CD4-positive, alpha-beta memory T cell (primary cell): ENCODE measurements at regions of chrX and their contacts with region 1.

Region 1: DNA sequence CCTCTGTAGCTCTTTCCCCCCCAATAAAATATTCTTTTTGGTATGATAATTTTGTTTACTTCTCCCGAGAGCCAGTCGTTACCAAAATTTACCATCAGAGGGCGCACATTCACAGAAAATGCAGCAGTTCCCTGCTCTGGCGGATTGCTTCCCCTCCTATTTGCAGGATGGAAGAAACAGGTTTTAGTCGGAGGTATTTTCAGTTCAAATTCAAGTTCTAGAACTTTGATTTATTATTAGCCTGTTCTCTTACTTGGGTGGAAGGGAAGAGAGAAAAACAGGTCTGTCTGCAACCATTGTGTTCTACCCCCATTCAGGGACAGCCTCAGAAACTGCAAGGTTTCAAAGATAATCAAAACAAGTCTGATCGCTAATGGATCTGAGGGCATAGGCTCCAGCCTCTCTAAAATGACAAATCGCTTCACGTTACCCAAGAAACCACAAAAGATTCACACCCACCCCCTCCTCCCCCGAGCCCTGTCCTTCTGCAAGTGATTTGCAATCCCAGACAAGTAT is 263.8 kb upstream of the RPS6KA3 start:
- DNase-seq: peak; percentile 39 to 57 (median 50)
- H3K4me3 ChIP-seq: no peak overlapping the region
- H3K4me3 Mint-ChIP-seq: peak overlapping the region in 2 of 8 donors; percentile 12 to 45
- H3K27ac ChIP-seq: no peak overlapping the region
- H3K27ac Mint-ChIP-seq: no peak overlapping the region
- H3K4me1 ChIP-seq: no peaks in the 10 kb centered on the region
- H3K4me1 Mint-ChIP-seq: peaks cover 2 to 11% (median 6%) of the 10 kb centered on the region in 4 donors
- H3K27me3 ChIP-seq: no peaks in the 10 kb centered on the region
- H3K27me3 Mint-ChIP-seq: peaks cover 11 to 17% of the 10 kb centered on the region in 2 donors

Region 2: DNA sequence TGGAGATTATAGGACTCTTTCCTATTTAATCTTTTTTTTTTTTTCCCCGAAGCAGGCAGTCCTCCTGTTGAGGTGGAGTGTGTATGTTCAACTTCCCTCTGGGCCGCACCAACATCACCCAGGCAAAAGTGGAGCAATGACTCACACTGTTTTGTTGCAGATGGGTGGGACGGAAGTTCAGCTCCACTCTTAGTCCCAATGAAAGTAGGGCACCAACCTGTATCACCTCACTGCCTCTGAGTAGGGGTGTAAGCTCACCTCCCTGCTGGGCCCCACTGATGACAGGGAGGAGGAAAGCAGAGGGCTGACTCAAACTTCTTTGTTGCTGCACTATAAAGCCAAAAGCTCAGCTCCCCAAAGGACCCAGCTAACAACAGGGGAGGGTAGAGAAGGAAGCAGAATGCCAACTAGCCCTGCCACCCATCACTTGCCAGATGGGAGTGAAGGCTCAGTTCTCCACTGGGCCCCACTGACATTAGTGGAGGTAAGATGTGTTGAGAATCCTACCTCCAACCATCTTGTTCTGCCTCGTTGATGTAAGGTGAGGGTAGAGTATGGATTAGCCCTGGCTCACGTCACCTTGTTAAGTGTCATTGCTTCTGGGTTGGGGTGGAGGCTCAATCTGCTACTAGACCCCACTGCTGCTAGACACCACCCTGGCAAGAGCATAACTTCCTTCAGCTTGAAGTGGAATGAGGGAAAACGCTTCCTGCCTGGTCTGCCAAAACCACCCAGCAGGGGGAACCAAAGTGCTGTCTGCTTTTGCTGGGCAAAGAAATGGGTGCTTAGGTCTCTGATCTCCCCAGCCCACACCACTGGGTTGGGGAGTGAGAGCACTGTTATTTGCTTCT is 277.9 kb before region 1 on chrX:
- CTCF ChIA-PET with region 1: interaction called, 16 read pairs
- POLR2A ChIA-PET with region 1: interaction called, 3 read pairs
- intact Hi-C with region 1: loop called (anchors 10 kb)
- DNase-seq: peak; percentile 72 to 82 (median 75)
- H3K4me3 ChIP-seq: no peak overlapping the region
- H3K4me3 Mint-ChIP-seq: peak overlapping the region in 7 of 8 donors; percentile 32 to 66 (median 48)
- H3K27ac ChIP-seq: peak overlapping the region; percentile 48
- H3K27ac Mint-ChIP-seq: peak overlapping the region; percentile 88 to 94 (median 92)
- H3K4me1 ChIP-seq: peaks cover 70% of the 10 kb centered on the region
- H3K4me1 Mint-ChIP-seq: peaks cover 36 to 67% (median 50%) of the 10 kb centered on the region in 4 donors
- H3K27me3 ChIP-seq: no peaks in the 10 kb centered on the region
- H3K27me3 Mint-ChIP-seq: no peaks in the 10 kb centered on the region

Region 3: DNA sequence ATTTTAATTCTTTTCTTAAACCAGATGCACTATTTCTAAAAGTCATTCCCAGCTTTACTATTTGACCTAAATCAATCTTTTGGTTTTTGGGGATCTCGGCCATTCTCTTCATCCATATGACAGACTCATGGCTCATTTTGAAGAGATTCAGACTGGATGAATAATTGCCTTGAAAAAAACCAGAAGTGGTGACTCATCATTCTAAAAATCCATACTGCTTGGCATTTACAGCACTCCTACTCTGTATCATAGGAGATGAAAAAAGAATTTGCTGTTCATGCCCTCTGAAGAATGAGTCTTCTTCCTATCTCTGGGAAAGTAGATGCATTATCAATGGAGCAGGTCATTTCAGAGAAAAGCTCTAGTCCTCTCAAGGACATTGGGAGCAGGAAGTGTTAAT is 43.2 kb before region 1 on chrX:
- CTCF ChIA-PET with region 1: no interaction called
- POLR2A ChIA-PET with region 1: no interaction called
- intact Hi-C with region 1: no loop called
- DNase-seq: no peak
- H3K4me3 ChIP-seq: no peak overlapping the region
- H3K4me3 Mint-ChIP-seq: no peak overlapping the region
- H3K27ac ChIP-seq: no peak overlapping the region
- H3K27ac Mint-ChIP-seq: no peak overlapping the region
- H3K4me1 ChIP-seq: no peaks in the 10 kb centered on the region
- H3K4me1 Mint-ChIP-seq: no peaks in the 10 kb centered on the region
- H3K27me3 ChIP-seq: no peaks in the 10 kb centered on the region
- H3K27me3 Mint-ChIP-seq: no peaks in the 10 kb centered on the region

Region 4: GRCh38 chrX:20515841-20516461 is 14.5 kb before region 1 on chrX:
- CTCF ChIA-PET with region 1: interaction called, 10 read pairs
- POLR2A ChIA-PET with region 1: no interaction called
- intact Hi-C with region 1: no loop called
- DNase-seq: no peak
- H3K4me3 ChIP-seq: no peak overlapping the region
- H3K4me3 Mint-ChIP-seq: peak overlapping the region in 1 of 8 donors; percentile 13
- H3K27ac ChIP-seq: no peak overlapping the region
- H3K27ac Mint-ChIP-seq: no peak overlapping the region
- H3K4me1 ChIP-seq: no peaks in the 10 kb centered on the region
- H3K4me1 Mint-ChIP-seq: peaks cover 0 to 5% (median 1%) of the 10 kb centered on the region in 4 donors
- H3K27me3 ChIP-seq: no peaks in the 10 kb centered on the region
- H3K27me3 Mint-ChIP-seq: peaks cover 0 to 3% of the 10 kb centered on the region in 2 donors

Region 5: DNA sequence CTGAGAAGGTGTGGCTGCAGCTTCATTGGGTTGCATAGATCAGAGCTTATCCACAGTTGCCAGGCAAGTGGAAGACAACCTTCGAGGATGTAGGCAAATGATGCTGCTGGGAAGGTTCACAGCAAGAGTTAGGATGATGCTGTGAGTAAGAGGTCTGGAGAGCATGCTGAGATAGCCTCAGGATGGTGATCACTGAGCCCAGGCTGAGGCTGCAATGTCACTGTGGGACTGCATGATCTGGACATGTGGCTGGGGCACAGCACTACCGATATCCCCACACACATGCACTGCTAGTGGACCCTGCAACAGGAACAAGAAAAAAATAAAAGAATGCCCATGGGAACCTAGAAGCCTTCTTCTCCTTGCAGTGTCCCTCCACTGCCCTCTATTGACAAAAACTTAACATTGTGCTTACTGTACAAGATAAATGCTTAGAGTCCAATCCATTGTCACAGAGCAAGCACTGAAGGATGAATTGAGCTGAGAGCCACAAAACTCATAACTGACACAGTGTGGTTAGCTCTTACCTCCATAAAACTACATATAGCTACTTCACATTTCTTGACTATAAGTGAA is 949.3 kb after region 1 on chrX:
- CTCF ChIA-PET with region 1: interaction called, 70 read pairs
- POLR2A ChIA-PET with region 1: no interaction called
- intact Hi-C with region 1: loop called (anchors 1 kb)
- DNase-seq: peak in 4 of 5 donors; percentile 33 to 49 (median 37)
- H3K4me3 ChIP-seq: no peak overlapping the region
- H3K4me3 Mint-ChIP-seq: no peak overlapping the region
- H3K27ac ChIP-seq: no peak overlapping the region
- H3K27ac Mint-ChIP-seq: peak overlapping the region in 1 of 7 donors; percentile 60
- H3K4me1 ChIP-seq: no peaks in the 10 kb centered on the region
- H3K4me1 Mint-ChIP-seq: no peaks in the 10 kb centered on the region
- H3K27me3 ChIP-seq: no peaks in the 10 kb centered on the region
- H3K27me3 Mint-ChIP-seq: no peaks in the 10 kb centered on the region

Region 6: DNA sequence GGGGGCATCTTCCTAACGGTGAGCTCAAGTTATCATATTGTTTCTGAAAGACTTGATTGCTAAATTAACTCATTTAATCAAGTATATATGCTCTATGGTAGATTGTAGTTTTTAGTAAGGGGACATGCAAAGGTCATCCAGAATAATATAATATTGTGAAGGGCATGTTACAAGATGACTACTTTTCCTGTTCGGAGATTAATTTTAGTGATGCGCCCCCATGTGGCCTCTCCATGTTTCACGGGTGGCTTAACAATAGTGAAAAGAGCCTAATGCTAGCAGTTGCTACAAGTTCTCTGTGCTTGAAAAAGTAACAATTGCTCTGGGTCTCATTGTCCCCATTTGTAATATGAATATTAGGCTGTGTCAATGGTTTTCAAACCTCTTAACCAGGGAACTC is 1215.3 kb after region 1 on chrX:
- CTCF ChIA-PET with region 1: interaction called, 12 read pairs
- POLR2A ChIA-PET with region 1: no interaction called
- intact Hi-C with region 1: loop called (anchors 1 kb)
- DNase-seq: peak; percentile 5 to 34 (median 19)
- H3K4me3 ChIP-seq: no peak overlapping the region
- H3K4me3 Mint-ChIP-seq: no peak overlapping the region
- H3K27ac ChIP-seq: no peak overlapping the region
- H3K27ac Mint-ChIP-seq: no peak overlapping the region
- H3K4me1 ChIP-seq: no peaks in the 10 kb centered on the region
- H3K4me1 Mint-ChIP-seq: no peaks in the 10 kb centered on the region
- H3K27me3 ChIP-seq: no peaks in the 10 kb centered on the region
- H3K27me3 Mint-ChIP-seq: peaks cover 3 to 9% of the 10 kb centered on the region in 2 donors

Region 7: GRCh38 chrX:21985332-21985777 is 1454.9 kb after region 1 on chrX:
- CTCF ChIA-PET with region 1: no interaction called
- POLR2A ChIA-PET with region 1: no interaction called
- intact Hi-C with region 1: loop called (anchors 10 kb)
- DNase-seq: peak; percentile 61 to 75 (median 74)
- H3K4me3 ChIP-seq: no peak overlapping the region
- H3K4me3 Mint-ChIP-seq: no peak overlapping the region
- H3K27ac ChIP-seq: no peak overlapping the region
- H3K27ac Mint-ChIP-seq: peak overlapping the region in 2 of 7 donors; percentile 5 to 8
- H3K4me1 ChIP-seq: no peaks in the 10 kb centered on the region
- H3K4me1 Mint-ChIP-seq: peaks cover 2 to 5% (median 3%) of the 10 kb centered on the region in 4 donors
- H3K27me3 ChIP-seq: no peaks in the 10 kb centered on the region
- H3K27me3 Mint-ChIP-seq: no peaks in the 10 kb centered on the region

Region 8: DNA sequence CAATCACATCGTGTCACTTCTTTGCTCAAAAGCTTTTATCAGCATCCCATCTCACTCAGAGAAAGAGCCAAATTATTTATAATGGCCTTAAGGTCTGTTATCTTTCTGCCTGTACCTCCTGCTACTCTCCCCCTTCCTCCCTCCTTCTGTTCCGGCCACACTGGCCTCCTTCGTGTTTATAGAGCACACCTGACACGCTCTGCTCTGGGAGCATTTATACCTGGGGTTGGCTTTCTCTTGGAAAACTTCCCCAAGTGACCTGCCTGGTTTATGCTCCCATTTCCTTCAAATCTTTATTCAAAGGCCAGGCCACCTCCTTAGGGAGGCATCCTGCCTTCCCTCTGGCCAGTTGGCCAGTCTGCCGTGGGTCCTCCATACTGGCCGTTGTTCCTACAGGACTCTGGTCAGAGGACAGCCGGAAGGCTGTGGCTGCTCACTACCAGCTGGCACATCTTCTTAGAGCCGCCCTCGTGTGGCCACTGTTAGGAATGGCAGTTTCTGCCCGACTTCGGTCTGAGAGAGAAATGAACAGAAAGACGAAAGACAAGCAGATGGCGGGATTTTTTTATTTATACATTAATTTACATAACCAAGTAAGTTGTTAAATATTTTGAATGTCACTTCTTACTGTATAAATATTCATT is 1662.1 kb after region 1 on chrX:
- CTCF ChIA-PET with region 1: no interaction called
- POLR2A ChIA-PET with region 1: no interaction called
- intact Hi-C with region 1: loop called (anchors 2 kb)
- DNase-seq: peak in 4 of 5 donors; percentile 28 to 46 (median 40)
- H3K4me3 ChIP-seq: no peak overlapping the region
- H3K4me3 Mint-ChIP-seq: peak overlapping the region in 2 of 8 donors; percentile 51 to 53
- H3K27ac ChIP-seq: no peak overlapping the region
- H3K27ac Mint-ChIP-seq: no peak overlapping the region
- H3K4me1 ChIP-seq: no peaks in the 10 kb centered on the region
- H3K4me1 Mint-ChIP-seq: peaks cover 0 to 4% (median 3%) of the 10 kb centered on the region in 4 donors
- H3K27me3 ChIP-seq: no peaks in the 10 kb centered on the region
- H3K27me3 Mint-ChIP-seq: peaks cover 0 to 1% of the 10 kb centered on the region in 2 donors